GM13976 (cell line): ENCODE measurements at regions of chr22 and their contacts with region 1.

Region 1: DNA sequence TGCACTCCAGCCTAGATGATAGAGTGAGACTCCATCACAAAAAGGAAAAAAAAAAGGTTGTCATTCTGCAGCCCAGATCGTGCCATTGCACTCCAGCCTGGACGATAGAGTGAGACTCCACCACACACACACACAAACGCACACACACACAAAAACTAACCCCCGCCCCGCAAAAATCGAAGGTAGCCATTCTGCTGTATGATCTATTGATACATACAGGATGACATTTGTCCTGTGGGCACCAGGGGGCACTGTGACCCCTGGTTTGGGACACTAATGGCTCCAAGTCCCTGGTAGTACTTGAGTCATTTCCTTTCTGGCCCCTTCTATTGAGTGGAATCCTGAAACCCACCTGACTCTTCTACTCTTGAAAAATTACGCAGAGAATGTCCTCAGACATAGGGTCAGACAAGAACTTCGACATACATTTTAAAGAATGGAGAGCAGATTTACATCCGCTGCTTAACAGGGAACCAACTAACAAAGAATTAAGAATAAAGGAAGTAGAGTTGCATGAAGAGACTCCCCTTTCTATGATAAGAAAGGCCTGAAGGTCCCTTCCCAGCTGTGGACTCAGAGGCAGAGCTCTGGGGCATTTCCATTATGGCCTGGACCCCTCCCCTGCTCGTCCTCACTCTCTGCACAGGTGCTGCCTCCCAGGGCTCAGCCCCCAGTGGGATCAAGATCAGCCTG is 35.0 kb upstream of the PRAME start:
- DNase-seq: peak; percentile 73
- CTCF ChIP-seq: peak; percentile 66

Region 2: GRCh38 chr22:22207845-22208564 is 386.1 kb before region 1 on chr22:
- in situ Hi-C with region 1: no loop called
- DNase-seq: peak; percentile 84
- CTCF ChIP-seq: peak; percentile 91

Region 3: DNA sequence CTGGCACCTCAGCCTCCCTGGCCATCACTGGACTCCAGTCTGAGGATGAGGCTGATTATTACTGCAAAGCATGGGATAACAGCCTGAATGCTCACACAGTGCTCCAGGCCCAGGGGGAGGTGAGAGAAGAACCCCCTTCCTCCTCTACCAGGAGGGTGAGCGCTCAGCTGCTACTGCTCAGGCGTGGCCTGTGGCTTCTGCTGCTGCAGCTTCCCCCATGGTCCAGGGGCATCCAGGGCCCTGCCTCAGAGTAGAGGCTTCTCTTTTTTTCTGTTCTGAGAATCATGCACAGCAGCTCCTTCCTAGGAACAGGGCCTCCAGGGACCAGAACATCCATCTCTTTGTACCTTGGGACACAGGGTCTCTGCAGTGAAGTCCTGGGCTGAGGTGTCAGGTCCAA is 266.4 kb before region 1 on chr22:
- in situ Hi-C with region 1: no loop called
- DNase-seq: no peak
- CTCF ChIP-seq: no peak

Region 4: DNA sequence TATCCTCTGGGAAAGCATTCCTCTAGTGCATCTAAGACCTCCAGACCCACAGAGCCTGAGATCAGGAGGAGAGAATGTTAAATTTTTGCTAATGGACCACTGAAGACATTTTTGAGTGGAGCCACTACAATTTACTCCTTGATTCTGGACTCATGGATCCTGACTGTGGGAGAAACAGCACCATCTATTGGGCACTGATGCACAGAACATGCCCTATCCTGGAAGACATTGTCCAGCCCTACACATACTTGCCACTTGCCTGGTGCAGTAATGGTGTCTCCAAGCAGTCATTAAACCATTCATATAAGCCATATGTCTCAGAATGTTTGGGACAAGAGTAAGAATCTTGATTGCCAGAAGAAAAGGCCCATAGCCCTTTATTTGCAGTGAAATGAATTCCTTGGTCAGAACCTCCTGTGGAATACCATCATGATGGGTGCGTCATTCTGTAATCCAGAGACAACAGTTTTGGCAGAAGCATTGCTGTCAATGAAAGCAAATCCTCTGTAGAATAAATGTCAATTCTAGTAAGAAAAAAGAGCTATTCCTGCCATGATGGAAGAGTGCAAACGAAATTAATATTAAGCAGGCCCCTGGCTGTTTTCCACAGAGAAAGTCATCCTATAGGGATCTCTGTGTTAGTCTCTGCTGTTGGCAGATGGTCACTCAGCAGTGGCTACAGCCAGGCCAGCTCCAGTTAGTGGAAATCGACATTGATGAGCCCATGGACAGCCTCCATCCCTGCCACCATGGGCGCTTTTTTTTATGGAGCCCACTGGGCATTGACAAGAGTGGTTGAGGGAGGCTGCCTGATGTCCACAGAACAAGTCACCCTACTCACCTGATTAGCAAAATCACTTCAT is 93.8 kb after region 1 on chr22:
- in situ Hi-C with region 1: loop called (anchors 25 kb)
- DNase-seq: peak; percentile 51
- CTCF ChIP-seq: peak; percentile 75